ENCODE measurements at regions of chr9 and their contacts with region 1.

Region 1: GRCh38 chr9:132079391-132080091 is at the start of gene MED27:
- DNase-seq: peak; percentile 68 to 96
- H3K4me3 ChIP-seq: peak within 1 kb of the TSS; percentile 86 to 92
- H3K27ac ChIP-seq: peak within 1 kb of the TSS; percentile 62 to 75
- H3K4me1 ChIP-seq: peaks cover 0 to 35% of the 10 kb centered on the region in 2 donors
- H3K27me3 ChIP-seq: no peaks in the 10 kb centered on the region
- CTCF ChIP-seq: no peak
- total RNA-seq, gene MED27: 19.4 TPM

Region 2: DNA sequence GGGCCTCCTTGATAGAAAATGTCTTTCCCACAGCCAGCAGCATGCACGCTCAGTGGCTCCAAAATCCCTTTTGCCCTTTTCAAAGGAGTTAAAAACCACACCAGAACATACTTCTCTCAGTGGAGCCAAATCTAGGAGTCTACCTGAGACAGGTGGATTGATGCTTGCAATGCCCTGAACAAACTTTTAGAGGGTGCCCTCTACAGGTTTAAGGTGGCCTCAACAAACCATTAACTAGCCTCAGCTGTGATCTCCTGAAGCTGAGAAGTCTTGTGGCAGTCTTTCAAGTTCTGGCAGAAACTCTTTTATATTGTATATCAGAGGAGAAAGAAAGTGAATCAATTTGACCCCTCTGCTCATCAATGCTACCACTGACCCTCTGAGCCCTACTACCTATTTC is 125.2 kb before region 1 on chr9:
- intact Hi-C with region 1: loop called (anchors 5 kb)
- DNase-seq: no peak
- H3K4me3 ChIP-seq: no peak overlapping the region
- H3K27ac ChIP-seq: no peak overlapping the region
- H3K4me1 ChIP-seq: peaks cover 3 to 10% of the 10 kb centered on the region in 2 donors
- H3K27me3 ChIP-seq: no peaks in the 10 kb centered on the region
- CTCF ChIP-seq: no peak

Region 3: DNA sequence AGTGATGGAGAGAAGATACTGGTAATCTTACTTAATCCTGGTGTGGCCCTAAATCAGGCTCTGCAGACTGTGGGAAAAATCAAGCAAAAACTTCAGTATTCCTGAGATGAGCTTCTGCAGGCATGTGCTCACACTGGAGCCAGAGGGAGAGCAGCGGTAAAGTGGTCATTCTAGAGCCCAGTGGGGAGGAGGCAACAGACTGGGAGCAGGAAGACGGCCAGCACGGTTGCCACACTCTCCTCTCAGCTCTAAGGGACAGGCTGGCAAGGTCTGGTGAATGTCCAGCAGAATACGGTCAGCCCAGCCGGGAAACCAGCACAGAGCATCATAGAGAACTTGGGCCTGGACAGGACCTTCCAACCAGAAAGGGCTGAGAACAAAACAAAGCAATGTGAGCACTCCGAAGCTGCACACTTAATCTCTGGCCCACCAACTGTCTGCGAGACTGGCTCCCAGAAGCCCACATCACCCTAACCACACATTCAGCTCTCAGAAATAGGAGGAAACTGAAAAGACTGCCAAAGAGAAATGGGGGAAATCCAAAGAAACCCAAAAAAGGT is 30.1 kb before region 1 on chr9:
- intact Hi-C with region 1: no loop called
- DNase-seq: peak in 1 of 2 donors; percentile 71
- H3K4me3 ChIP-seq: no peak overlapping the region
- H3K27ac ChIP-seq: peak overlapping the region; percentile 47 to 54
- H3K4me1 ChIP-seq: peaks cover 0 to 6% of the 10 kb centered on the region in 2 donors
- H3K27me3 ChIP-seq: no peaks in the 10 kb centered on the region
- CTCF ChIP-seq: no peak

Region 4: GRCh38 chr9:132669698-132670456 is 590.3 kb after region 1 on chr9 and contains the start of gene DDX31:
- intact Hi-C with region 1: loop called (anchors 10 kb)
- DNase-seq: peak; percentile 21 to 89
- H3K4me3 ChIP-seq: peak within 1 kb of the TSS; percentile 83 to 100
- H3K27ac ChIP-seq: peak within 1 kb of the TSS; percentile 93 to 99
- H3K4me1 ChIP-seq: peaks cover 0 to 19% of the 10 kb centered on the region in 2 donors
- H3K27me3 ChIP-seq: no peaks in the 10 kb centered on the region
- CTCF ChIP-seq: no peak
- total RNA-seq, gene DDX31: 20.4 TPM